Activated naive CD4-positive, alpha-beta T cell treated with anti-CD3 and anti-CD28 coated beads, Interleukin-2, amount 10 ng/mL, durations not matched to agents 7 days and 5 days (primary cell): ENCODE measurements at regions of chr17 and their contacts with region 1.

Region 1: DNA sequence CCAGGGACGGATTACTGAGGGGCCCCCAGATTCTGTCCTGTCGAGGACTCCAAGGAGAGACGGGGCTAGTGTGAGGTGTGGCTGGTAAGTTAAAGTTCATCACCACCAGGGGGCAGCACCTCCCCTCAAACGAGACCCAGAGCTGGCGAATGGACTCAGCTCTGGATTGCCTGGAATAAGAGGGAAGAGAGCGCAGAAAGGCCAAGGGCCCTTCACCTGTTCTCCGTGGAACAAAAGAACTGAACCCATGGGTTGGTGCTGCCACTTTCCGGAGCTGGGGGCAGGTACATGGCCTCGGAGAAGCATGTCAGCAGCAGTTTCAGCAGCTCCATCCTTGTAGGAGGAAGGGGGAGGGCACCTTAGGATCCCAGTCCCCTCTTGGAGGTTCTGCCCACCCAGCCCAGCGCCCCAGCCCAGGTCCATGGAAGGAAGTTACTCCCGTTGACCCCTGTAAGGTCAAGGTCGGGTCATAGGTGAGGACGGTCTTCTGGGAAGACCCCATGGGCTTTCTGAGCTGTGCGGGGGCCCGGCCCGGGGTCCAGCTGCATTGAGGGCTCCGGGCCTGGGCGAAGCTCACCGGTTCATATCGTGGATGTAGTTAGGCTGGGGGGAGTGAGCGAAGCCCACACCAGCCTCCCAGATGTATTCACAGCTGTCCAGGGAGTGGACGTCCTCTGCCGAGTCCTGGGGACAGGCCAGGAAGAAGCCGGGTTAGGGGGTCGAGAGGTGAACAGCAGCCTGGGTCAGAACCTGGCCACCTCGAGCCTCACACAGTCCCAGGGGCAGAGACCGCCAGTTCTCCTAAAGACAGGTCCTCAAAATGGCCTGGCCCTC is 10.7 kb downstream of the HID1 start:
- DNase-seq: peak; percentile 89
- H3K4me3 Mint-ChIP-seq: no peak overlapping the region
- H3K27ac Mint-ChIP-seq: no peak overlapping the region
- H3K4me1 Mint-ChIP-seq: peaks cover 9% of the 10 kb centered on the region
- H3K27me3 Mint-ChIP-seq: peaks cover 38% of the 10 kb centered on the region

Region 2: DNA sequence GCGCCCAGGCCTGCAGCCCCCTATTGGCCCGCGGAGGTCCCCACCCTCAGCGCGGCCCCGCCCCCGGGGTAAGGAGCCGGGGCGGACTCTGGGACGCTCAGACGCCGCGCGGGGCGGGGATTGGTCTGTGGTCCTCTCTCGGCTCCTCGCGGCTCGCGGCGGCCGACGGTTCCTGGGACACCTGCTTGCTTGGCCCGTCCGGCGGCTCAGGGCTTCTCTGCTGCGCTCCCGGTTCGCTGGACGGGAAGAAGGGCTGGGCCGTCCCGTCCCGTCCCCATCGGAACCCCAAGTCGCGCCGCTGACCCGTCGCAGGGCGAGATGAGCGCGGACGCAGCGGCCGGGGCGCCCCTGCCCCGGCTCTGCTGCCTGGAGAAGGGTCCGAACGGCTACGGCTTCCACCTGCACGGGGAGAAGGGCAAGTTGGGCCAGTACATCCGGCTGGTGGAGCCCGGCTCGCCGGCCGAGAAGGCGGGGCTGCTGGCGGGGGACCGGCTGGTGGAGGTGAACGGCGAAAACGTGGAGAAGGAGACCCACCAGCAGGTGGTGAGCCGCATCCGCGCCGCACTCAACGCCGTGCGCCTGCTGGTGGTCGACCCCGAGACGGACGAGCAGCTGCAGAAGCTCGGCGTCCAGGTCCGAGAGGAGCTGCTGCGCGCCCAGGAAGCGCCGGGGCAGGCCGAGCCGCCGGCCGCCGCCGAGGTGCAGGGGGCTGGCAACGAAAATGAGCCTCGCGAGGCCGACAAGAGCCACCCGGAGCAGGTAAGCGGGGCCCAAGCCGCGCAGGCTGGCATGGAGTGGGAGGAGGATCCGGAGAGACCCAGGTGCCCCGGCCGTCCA is 213.1 kb before region 1 on chr17 and contains the start of gene NHERF1:
- CTCF ChIA-PET with region 1: interaction called, 18 read pairs
- DNase-seq: peak; percentile 95
- H3K4me3 Mint-ChIP-seq: peak within 1 kb of the TSS; percentile 99
- H3K27ac Mint-ChIP-seq: peak within 1 kb of the TSS; percentile 88
- H3K4me1 Mint-ChIP-seq: peaks cover 64% of the 10 kb centered on the region
- H3K27me3 Mint-ChIP-seq: no peaks in the 10 kb centered on the region

Region 3: GRCh38 chr17:74945543-74945942 is 16.3 kb before region 1 on chr17:
- CTCF ChIA-PET with region 1: interaction called, 15 read pairs
- DNase-seq: no peak
- H3K4me3 Mint-ChIP-seq: no peak overlapping the region
- H3K27ac Mint-ChIP-seq: peak overlapping the region; percentile 12
- H3K4me1 Mint-ChIP-seq: no peaks in the 10 kb centered on the region
- H3K27me3 Mint-ChIP-seq: peaks cover 80% of the 10 kb centered on the region

Region 4: GRCh38 chr17:74987418-74987908 is 25.6 kb after region 1 on chr17 and contains the start of gene CDR2L:
- CTCF ChIA-PET with region 1: interaction called, 13 read pairs
- DNase-seq: peak; percentile 95
- H3K4me3 Mint-ChIP-seq: peak within 1 kb of the TSS; percentile 81
- H3K27ac Mint-ChIP-seq: peak within 1 kb of the TSS; percentile 69
- H3K4me1 Mint-ChIP-seq: peaks cover 27% of the 10 kb centered on the region
- H3K27me3 Mint-ChIP-seq: peaks cover 88% of the 10 kb centered on the region

Region 5: DNA sequence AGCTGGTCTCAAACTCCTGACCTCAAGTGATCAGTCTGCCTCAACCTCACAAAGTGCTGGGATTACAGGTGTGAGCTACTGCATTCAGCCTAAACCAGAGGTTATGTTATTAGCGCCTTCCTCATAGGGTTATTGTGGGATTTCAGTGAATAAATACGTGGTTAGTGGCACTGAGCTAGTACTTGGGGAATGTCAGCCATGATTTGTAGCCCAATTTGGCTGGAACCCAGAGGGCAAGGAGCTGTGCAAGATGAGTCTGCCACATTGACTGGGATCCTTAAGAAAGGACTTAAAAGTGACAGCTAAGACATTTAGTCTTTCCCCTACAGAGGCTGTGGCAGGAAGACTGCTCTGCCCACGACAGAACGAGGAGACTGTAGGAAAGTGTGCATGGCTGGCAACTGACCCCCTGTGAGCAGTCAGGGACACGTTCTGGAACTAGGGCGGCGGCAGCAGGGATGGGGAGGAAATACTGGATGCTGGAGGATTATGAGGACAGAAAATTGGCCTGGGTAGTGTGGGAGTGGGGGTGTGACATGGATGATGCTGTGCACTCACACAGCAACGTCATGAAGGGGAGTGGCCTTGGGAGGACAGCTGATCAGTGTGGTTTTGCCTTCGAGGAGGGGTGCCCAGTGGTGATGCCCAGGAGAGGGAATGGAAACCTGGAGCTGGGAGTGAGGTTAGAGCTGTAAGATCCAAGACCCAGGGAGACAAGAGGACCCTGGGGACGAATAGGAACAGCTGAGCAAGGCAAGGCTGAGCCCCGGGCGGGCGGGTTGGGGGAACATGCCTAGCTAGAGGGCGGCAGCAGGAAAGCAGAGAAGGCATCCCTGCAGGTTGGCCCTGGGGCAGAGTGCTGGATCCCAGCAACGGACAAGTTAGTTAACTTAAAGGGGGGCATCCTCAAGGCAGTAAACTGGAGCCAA is 70.4 kb after region 1 on chr17:
- CTCF ChIA-PET with region 1: interaction called, 12 read pairs
- DNase-seq: peak; percentile 64
- H3K4me3 Mint-ChIP-seq: peak overlapping the region; percentile 62
- H3K27ac Mint-ChIP-seq: no peak overlapping the region
- H3K4me1 Mint-ChIP-seq: peaks cover 62% of the 10 kb centered on the region
- H3K27me3 Mint-ChIP-seq: peaks cover 53% of the 10 kb centered on the region

Region 6: DNA sequence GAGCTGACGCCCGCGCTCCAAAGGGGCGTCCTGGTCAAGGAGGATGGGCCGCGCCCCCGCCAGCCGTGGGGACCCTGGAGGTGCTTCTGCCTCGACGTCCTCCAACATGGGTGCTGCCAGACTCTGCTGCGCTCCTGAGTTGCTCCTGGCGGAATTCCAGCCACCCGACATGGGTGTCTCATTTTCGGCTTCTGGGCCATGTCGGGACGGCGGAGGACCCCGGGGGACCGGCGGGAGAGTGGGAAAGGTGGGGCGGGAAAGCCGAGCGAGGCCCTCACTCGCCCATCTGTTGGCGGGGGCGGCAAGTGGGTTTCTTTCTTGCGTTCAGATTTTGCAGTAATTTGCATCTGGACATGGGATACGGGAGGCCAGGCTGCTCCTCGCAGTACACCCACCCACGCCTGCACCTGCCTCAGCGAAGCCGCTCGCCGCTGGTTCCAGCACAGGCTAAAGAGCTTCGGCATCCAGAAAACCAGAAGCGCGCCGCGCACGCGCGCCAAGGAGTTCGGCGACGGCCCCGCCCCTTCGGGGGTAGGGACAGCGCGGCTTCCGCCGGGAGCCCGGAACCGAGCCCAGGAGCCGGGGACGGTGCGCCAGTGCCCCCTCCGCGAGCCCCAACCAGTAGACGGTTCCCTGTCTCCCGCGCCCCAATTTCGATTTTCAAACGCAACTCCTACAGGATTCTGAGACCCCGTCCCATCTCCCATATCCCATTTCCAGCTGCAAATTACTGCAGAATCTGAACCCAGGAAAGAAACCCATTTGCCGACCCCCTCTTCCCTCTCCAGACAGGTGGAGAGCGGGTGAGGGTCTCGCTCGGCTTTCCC is 147.7 kb after region 1 on chr17 and contains the start of gene ARMC7:
- CTCF ChIA-PET with region 1: interaction called, 22 read pairs
- DNase-seq: peak; percentile 94
- H3K4me3 Mint-ChIP-seq: peak within 1 kb of the TSS; percentile 93
- H3K27ac Mint-ChIP-seq: peak within 1 kb of the TSS; percentile 80
- H3K4me1 Mint-ChIP-seq: peaks cover 49% of the 10 kb centered on the region
- H3K27me3 Mint-ChIP-seq: peaks cover 12% of the 10 kb centered on the region

Region 7: GRCh38 chr17:75138519-75138918 is 176.6 kb after region 1 on chr17:
- CTCF ChIA-PET with region 1: no interaction called
- DNase-seq: no peak
- H3K4me3 Mint-ChIP-seq: no peak overlapping the region
- H3K27ac Mint-ChIP-seq: no peak overlapping the region
- H3K4me1 Mint-ChIP-seq: peaks cover 25% of the 10 kb centered on the region
- H3K27me3 Mint-ChIP-seq: no peaks in the 10 kb centered on the region

Region 8: DNA sequence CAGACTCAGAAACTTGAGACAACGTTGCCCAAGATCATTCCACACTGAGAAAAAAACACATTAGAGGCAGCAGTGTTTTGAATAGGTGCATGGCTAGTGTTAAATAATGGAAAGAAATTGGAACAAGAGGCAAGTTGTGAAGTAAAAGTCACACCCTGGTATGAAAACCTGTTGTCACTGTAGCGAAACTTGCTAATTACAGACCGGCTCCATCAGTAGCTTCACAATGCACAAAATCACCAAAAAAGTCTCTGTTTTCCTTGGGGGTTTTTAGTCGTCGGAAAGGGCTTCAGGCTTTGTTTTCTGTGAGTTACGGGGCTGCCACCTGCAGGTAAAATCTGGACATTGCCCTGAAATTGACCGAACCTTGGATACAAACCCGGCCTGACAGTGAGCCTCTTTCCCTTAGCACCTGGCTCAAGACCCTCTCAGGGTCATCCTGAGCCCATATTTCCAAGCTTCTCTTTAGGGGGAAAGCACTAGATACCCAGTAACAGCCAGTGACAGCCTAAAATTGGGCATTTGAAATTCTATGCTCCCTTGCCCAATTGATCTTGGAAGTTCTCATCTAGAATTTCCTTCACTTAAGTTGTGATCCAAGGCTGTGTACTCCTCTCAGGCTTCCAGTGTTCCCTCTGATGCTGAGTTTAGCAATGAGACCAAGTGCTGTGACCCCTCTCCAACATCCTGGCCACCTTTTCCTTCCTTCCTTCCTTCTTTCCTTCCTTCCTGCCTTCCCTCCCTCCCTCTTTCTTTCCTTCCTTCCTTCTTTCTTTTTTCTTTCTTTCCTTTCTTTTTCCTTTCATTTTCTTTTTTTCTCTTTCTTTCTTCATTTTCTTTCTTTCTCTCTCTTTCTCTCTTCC is 450.8 kb after region 1 on chr17:
- CTCF ChIA-PET with region 1: interaction called, 12 read pairs
- DNase-seq: peak; percentile 79
- H3K4me3 Mint-ChIP-seq: peak overlapping the region; percentile 13
- H3K27ac Mint-ChIP-seq: peak overlapping the region; percentile 64
- H3K4me1 Mint-ChIP-seq: peaks cover 29% of the 10 kb centered on the region
- H3K27me3 Mint-ChIP-seq: peaks cover 45% of the 10 kb centered on the region